ENCODE measurements at regions of chr1 and their contacts with region 1.

Region 1: GRCh38 chr1:206912445-206913095 is 9.2 kb downstream of the FCMR start:
- DNase-seq: peak; percentile 55
- H3K4me3 ChIP-seq: no peak overlapping the region
- H3K27ac ChIP-seq: no peak overlapping the region
- H3K27me3 ChIP-seq: peaks cover 14% of the 10 kb centered on the region
- CTCF ChIP-seq: peak; percentile 80

Region 2: DNA sequence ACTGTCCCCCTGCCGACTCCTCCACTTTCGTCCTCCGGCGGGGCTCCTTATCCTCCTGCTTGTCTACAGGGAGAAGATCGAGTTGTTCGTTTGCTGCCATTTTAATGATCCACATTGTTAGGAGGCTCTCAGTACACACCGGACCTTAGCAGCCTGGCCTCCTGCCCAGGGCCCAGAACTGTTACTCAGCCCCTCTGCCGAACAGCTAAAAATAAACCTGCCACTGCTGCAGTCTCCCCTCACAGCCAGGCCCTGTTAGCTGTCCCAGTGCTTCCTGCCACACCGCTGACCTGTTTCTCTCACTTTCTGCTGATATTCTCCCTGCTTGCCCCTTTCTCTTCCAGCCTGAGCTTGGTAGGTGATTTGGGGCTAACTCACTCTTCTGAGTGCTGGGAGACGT is 219.5 kb before region 1 on chr1:
- CTCF ChIA-PET with region 1: interaction called, 21 read pairs
- POLR2A ChIA-PET with region 1: no interaction called
- DNase-seq: no peak
- H3K4me3 ChIP-seq: peak overlapping the region; percentile 31
- H3K27ac ChIP-seq: peak overlapping the region; percentile 82
- H3K27me3 ChIP-seq: no peaks in the 10 kb centered on the region
- CTCF ChIP-seq: no peak

Region 3: GRCh38 chr1:206734499-206735142 is 177.9 kb before region 1 on chr1:
- CTCF ChIA-PET with region 1: interaction called, 147 read pairs
- POLR2A ChIA-PET with region 1: interaction called, 4 read pairs
- DNase-seq: no peak
- H3K4me3 ChIP-seq: no peak overlapping the region
- H3K27ac ChIP-seq: no peak overlapping the region
- H3K27me3 ChIP-seq: no peaks in the 10 kb centered on the region
- CTCF ChIP-seq: peak; percentile 91

Region 4: DNA sequence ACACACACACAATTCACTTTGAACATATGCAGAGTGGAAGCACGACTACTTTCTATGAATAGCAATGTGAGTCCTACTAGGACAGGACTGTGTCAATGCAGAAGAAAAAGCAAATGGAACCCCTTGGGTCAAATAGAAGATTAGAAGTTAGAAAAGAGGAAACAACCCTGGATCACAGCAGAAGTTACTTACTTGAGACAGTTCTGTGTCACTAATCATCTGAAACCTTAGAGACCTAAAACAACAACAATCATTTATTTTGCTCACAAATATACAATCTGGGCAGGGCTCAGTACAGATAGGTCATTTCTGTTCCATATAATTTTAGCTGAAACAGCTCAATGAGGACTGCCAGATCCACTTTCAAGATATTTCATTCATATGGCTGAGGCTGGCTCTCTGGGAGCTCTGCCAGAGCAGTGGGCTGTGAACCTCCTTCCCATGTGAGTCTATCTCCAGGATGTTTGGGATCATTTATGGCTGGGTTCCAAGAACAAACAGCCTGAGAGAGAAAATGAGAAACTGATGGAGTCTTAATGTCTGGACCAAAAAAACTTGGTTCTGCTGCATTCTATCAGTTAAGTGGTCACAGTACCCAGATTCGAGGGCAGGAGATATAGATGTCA is 97.7 kb before region 1 on chr1:
- CTCF ChIA-PET with region 1: interaction called, 107 read pairs
- POLR2A ChIA-PET with region 1: no interaction called
- DNase-seq: peak; percentile 65
- H3K4me3 ChIP-seq: no peak overlapping the region
- H3K27ac ChIP-seq: no peak overlapping the region
- H3K27me3 ChIP-seq: no peaks in the 10 kb centered on the region
- CTCF ChIP-seq: no peak

Region 5: GRCh38 chr1:206872139-206872538 is 40.4 kb before region 1 on chr1:
- CTCF ChIA-PET with region 1: interaction called, 28 read pairs
- POLR2A ChIA-PET with region 1: no interaction called
- DNase-seq: no peak
- H3K4me3 ChIP-seq: no peak overlapping the region
- H3K27ac ChIP-seq: no peak overlapping the region
- H3K27me3 ChIP-seq: no peaks in the 10 kb centered on the region
- CTCF ChIP-seq: no peak

Region 6: GRCh38 chr1:206982216-206982615 is 69.6 kb after region 1 on chr1:
- CTCF ChIA-PET with region 1: interaction called, 25 read pairs
- POLR2A ChIA-PET with region 1: no interaction called
- DNase-seq: no peak
- H3K4me3 ChIP-seq: no peak overlapping the region
- H3K27ac ChIP-seq: no peak overlapping the region
- H3K27me3 ChIP-seq: peaks cover 42% of the 10 kb centered on the region
- CTCF ChIP-seq: peak; percentile 67